Thyroid gland (tissue), 4 donors: ENCODE measurements at regions of chr2 and their contacts with region 1.

Region 1: GRCh38 chr2:60707750-60708371 is 48.2 kb upstream of the PAPOLG start:
- DNase-seq: peak; percentile 1 to 22
- H3K4me3 ChIP-seq: no peak overlapping the region
- H3K27ac ChIP-seq: no peak overlapping the region
- H3K4me1 ChIP-seq: no peaks in the 10 kb centered on the region
- H3K27me3 ChIP-seq: no peaks in the 10 kb centered on the region
- CTCF ChIP-seq: peak; percentile 27 to 75 (median 68)
- POLR2A ChIP-seq: no peak

Region 2: GRCh38 chr2:60806988-60807681 is 99.3 kb after region 1 on chr2:
- intact Hi-C with region 1: loop called (anchors 10 kb)
- DNase-seq: peak; percentile 18 to 28
- H3K4me3 ChIP-seq: no peak overlapping the region
- H3K27ac ChIP-seq: no peak overlapping the region
- H3K4me1 ChIP-seq: peaks cover 11 to 14% of the 10 kb centered on the region in 2 donors
- H3K27me3 ChIP-seq: no peaks in the 10 kb centered on the region
- CTCF ChIP-seq: no peak
- POLR2A ChIP-seq: no peak

Region 3: GRCh38 chr2:60998628-60999545 is 291.0 kb after region 1 on chr2:
- intact Hi-C with region 1: loop called (anchors 5 kb)
- DNase-seq: no peak
- H3K4me3 ChIP-seq: no peak overlapping the region
- H3K27ac ChIP-seq: no peak overlapping the region
- H3K4me1 ChIP-seq: no peaks in the 10 kb centered on the region
- H3K27me3 ChIP-seq: no peaks in the 10 kb centered on the region
- CTCF ChIP-seq: peak in 5 of 6 experiments; percentile 31 to 76 (median 62)
- POLR2A ChIP-seq: no peak